ENCODE measurements at regions of chr2 and their contacts with region 1.

Region 1: DNA sequence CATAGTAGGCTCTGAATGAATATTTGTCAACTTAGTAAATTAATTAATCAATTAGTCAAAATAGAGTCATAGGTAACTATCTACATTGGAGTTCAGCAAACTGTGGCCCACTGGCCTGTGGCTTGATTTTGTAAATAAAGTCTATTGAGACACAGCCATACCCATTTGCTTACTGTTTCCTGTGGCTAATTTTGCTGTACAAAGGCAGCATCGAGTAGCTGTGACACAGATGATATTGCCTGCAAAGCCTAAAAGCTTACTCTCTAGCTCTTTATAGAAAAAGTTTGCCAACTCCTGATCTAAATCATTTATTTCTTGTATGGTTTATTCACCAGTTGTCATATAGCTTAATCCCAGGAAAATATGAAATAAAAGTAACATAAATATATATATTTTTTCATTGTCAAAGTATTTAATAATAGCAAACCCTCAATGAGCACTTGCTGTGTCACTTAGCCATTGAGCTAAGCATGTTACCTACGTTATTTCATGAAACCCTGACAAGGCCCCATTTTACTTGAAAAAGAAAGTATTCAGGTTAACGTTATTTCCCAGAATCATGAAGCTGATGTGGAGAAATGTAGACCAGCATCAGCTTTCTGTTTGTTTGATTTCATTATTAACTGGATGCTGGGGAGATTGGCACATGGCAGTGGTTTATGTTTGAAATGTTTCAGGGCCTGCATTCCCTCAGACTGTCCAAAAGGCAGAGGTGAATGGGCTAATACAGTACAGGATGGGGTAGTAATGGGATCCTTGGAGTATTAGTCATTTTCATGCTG is 69.6 kb downstream of the ICOS start:
- DNase-seq: peak in 2 of 14 experiments; percentile 22 to 58
- ATAC-seq: peak; percentile 44
- H3K4me3 ChIP-seq: no peak overlapping the region
- H3K4me3 Mint-ChIP-seq: no peak overlapping the region
- H3K27ac ChIP-seq: peak overlapping the region in 1 of 2 donors; percentile 53
- H3K27ac Mint-ChIP-seq: peak overlapping the region; percentile 32
- H3K4me1 ChIP-seq: peaks cover 39% of the 10 kb centered on the region
- H3K4me1 Mint-ChIP-seq: peaks cover 89% of the 10 kb centered on the region
- H3K27me3 ChIP-seq: no peaks in the 10 kb centered on the region
- H3K27me3 Mint-ChIP-seq: no peaks in the 10 kb centered on the region
- CTCF ChIP-seq: no peak

Region 2: DNA sequence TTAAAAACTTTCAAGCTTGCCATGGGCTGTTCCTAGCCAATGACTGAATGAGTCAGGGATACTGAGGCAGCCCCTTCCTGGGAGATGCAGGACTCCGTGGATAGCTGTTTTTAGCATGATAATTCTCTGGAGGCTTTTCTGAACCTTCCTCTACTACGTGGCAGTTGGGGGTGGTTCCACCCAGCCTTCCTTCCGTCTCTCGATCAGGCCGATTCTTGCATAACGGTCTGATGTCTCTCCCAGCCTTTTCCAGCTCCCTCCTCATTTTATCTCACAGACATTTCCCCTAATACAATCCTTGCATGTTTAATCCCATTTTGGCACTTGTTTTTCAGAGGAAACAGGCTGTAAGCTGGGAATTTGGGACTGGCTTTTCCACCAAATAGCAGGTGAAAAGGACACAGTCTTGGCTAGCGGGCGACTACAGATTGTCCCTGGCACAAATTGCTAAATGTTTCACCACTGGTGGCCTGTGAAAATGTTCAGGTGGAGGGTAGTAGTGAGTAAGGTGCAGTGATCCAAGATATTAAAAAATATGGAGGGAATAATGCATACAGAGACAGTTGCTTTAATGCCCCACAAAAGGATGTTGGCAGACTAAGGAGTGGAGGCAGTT is 159.5 kb before region 1 on chr2:
- CTCF ChIA-PET with region 1: no interaction called
- POLR2A ChIA-PET with region 1: no interaction called
- intact Hi-C with region 1: no loop called
- DNase-seq: no peak
- ATAC-seq: no peak
- H3K4me3 ChIP-seq: no peak overlapping the region
- H3K4me3 Mint-ChIP-seq: no peak overlapping the region
- H3K27ac ChIP-seq: no peak overlapping the region
- H3K27ac Mint-ChIP-seq: no peak overlapping the region
- H3K4me1 ChIP-seq: no peaks in the 10 kb centered on the region
- H3K4me1 Mint-ChIP-seq: no peaks in the 10 kb centered on the region
- H3K27me3 ChIP-seq: no peaks in the 10 kb centered on the region
- H3K27me3 Mint-ChIP-seq: no peaks in the 10 kb centered on the region
- CTCF ChIP-seq: no peak

Region 3: GRCh38 chr2:203988500-203989260 is 17.5 kb before region 1 on chr2:
- CTCF ChIA-PET with region 1: no interaction called
- POLR2A ChIA-PET with region 1: interaction called, 10 read pairs
- intact Hi-C with region 1: no loop called
- DNase-seq: no peak
- ATAC-seq: no peak
- H3K4me3 ChIP-seq: no peak overlapping the region
- H3K4me3 Mint-ChIP-seq: no peak overlapping the region
- H3K27ac ChIP-seq: no peak overlapping the region
- H3K27ac Mint-ChIP-seq: no peak overlapping the region
- H3K4me1 ChIP-seq: peaks cover 8% of the 10 kb centered on the region
- H3K4me1 Mint-ChIP-seq: peaks cover 32% of the 10 kb centered on the region
- H3K27me3 ChIP-seq: no peaks in the 10 kb centered on the region
- H3K27me3 Mint-ChIP-seq: no peaks in the 10 kb centered on the region
- CTCF ChIP-seq: no peak

Region 4: DNA sequence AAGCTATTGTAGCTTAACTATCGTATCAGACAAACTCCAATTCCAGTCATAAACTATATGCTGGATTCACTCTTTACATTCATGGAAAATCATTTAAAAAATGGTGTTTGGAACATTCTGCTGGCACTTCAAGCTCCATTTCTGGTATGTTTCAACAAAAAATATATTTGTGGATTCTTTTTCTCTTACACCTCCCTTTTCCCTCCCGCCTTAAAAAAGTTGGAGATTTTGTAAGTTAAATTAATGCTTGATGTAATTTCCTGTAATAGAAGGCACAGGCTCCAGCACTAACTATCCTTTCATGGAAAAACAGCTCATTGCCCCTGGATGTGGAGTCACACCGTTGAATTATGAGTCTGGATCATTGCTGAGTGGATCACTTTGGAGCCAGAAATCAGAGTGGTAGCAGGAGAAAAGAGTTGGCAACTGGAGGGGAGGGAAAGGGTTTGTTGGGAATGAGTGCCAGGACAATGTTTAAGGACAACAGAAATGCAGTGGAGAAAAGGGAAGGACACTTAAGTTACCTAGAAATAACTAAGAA is 33.2 kb after region 1 on chr2:
- CTCF ChIA-PET with region 1: no interaction called
- POLR2A ChIA-PET with region 1: no interaction called
- intact Hi-C with region 1: no loop called
- DNase-seq: no peak
- ATAC-seq: no peak
- H3K4me3 ChIP-seq: no peak overlapping the region
- H3K4me3 Mint-ChIP-seq: no peak overlapping the region
- H3K27ac ChIP-seq: no peak overlapping the region
- H3K27ac Mint-ChIP-seq: no peak overlapping the region
- H3K4me1 ChIP-seq: no peaks in the 10 kb centered on the region
- H3K4me1 Mint-ChIP-seq: peaks cover 1% of the 10 kb centered on the region
- H3K27me3 ChIP-seq: no peaks in the 10 kb centered on the region
- H3K27me3 Mint-ChIP-seq: no peaks in the 10 kb centered on the region
- CTCF ChIP-seq: no peak

Region 5: DNA sequence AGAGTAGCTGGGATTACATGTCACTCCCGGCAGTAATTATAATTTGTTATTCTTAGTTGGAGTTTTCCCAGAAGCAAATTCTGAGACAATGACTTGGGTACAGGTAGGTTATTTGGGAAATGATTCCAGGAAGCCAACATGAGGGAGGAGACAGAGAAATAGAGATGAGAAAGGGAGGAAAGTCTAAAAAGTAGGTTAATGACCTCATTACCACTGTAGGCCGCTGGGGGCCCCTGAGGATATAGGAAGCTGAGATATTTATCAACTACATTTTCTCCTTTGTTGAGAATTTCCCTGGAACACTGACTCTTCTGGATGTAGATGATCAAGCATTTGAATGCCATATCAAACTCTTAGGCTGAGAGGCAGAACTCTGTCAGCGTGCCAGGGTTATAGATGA is 214.8 kb after region 1 on chr2:
- CTCF ChIA-PET with region 1: no interaction called
- POLR2A ChIA-PET with region 1: no interaction called
- intact Hi-C with region 1: no loop called
- DNase-seq: no peak
- ATAC-seq: no peak
- H3K4me3 ChIP-seq: no peak overlapping the region
- H3K4me3 Mint-ChIP-seq: no peak overlapping the region
- H3K27ac ChIP-seq: no peak overlapping the region
- H3K27ac Mint-ChIP-seq: no peak overlapping the region
- H3K4me1 ChIP-seq: no peaks in the 10 kb centered on the region
- H3K4me1 Mint-ChIP-seq: no peaks in the 10 kb centered on the region
- H3K27me3 ChIP-seq: peaks cover 0 to 3% of the 10 kb centered on the region in 2 experiments
- H3K27me3 Mint-ChIP-seq: peaks cover 11% of the 10 kb centered on the region
- CTCF ChIP-seq: no peak

Measured in CD4-positive, alpha-beta T cell (primary cell).